Left cardiac atrium (tissue), 4 donors: ENCODE measurements at regions of chr5 and their contacts with region 1.

Region 1: GRCh38 chr5:54492178-54492577 is 25.4 kb upstream of the SNX18 start:
- DNase-seq: no peak
- ATAC-seq: no peak

Region 2: DNA sequence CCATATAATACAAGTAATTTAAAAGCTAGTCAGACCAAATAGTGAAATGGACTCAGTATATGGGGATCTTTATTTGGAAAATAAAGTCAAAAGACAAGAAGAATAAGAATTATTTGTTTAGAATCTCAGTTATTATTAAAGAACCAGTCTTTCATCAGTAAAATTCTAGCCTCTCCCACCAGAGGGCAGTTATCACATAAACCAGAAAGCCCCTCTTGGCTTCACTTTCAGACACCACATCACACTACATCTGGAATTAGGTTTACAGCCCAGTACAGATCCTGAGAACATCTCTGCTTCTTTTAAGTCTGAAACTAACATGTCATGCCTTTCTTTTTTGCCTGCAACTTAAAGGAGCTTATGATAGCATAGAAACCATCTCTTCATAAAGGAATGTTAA is 48.9 kb before region 1 on chr5:
- intact Hi-C with region 1: loop called in 1 of 2 experiments (anchors 5 kb)
- DNase-seq: no peak
- ATAC-seq: no peak